ENCODE measurements at regions of chr2 and their contacts with region 1.

Region 1: GRCh38 chr2:158456309-158457066 is at the starts of genes CCDC148 and PKP4:
- DNase-seq: peak; percentile 94
- ATAC-seq: peak; percentile 84
- H3K4me3 ChIP-seq: peak within 1 kb of the TSS; percentile 84 to 100 (median 97)
- H3K27ac ChIP-seq: peak within 1 kb of the TSS; percentile 97
- H3K4me1 ChIP-seq: peaks cover 55% of the 10 kb centered on the region
- H3K27me3 ChIP-seq: no peaks in the 10 kb centered on the region; a peak in 1 of 5 replicates
- CTCF ChIP-seq: peak; percentile 44; the same call in 1 of the 2 replicates
- EP300 ChIP-seq: peak in 1 of 2 experiments; percentile 7; a peak in 1 of 4 replicates
- POLR2A ChIP-seq: peak in 1 of 2 experiments; percentile 50; a peak in 1 of 4 replicates
- RAD21 ChIP-seq: no peak
- total RNA-seq, gene CCDC148: 0.49 and 0.73 TPM in 2 replicates
- total RNA-seq, gene PKP4: 80.9 and 84.8 TPM in 2 replicates

Region 2: GRCh38 chr2:157684940-157685466 is 771.5 kb before region 1 on chr2:
- CTCF ChIA-PET with region 1: no interaction called
- POLR2A ChIA-PET with region 1: no interaction called
- in situ Hi-C with region 1: no loop called
- intact Hi-C with region 1: no loop called
- DNase-seq: no peak
- ATAC-seq: no peak
- H3K4me3 ChIP-seq: no peak overlapping the region
- H3K27ac ChIP-seq: no peak overlapping the region
- H3K4me1 ChIP-seq: no peaks in the 10 kb centered on the region
- H3K27me3 ChIP-seq: no peaks in the 10 kb centered on the region
- CTCF ChIP-seq: no peak
- EP300 ChIP-seq: no peak
- POLR2A ChIP-seq: no peak
- RAD21 ChIP-seq: no peak

Region 3: GRCh38 chr2:158034199-158034866 is 422.2 kb before region 1 on chr2:
- CTCF ChIA-PET with region 1: no interaction called
- POLR2A ChIA-PET with region 1: no interaction called
- in situ Hi-C with region 1: no loop called
- intact Hi-C with region 1: loop called (anchors 5 kb)
- DNase-seq: peak; percentile 74
- ATAC-seq: peak; percentile 96
- H3K4me3 ChIP-seq: no peak overlapping the region
- H3K27ac ChIP-seq: no peak overlapping the region
- H3K4me1 ChIP-seq: no peaks in the 10 kb centered on the region
- H3K27me3 ChIP-seq: peaks cover 0 to 17% of the 10 kb centered on the region in 2 experiments; a peak in 2 of 5 replicates
- CTCF ChIP-seq: peak; percentile 89
- EP300 ChIP-seq: no peak
- POLR2A ChIP-seq: no peak
- RAD21 ChIP-seq: peak; percentile 70

Region 4: GRCh38 chr2:158079672-158080071 is 376.8 kb before region 1 on chr2:
- CTCF ChIA-PET with region 1: no interaction called
- POLR2A ChIA-PET with region 1: no interaction called
- in situ Hi-C with region 1: no loop called
- intact Hi-C with region 1: loop called (anchors 5 kb)
- DNase-seq: peak; percentile 98
- ATAC-seq: peak; percentile 100
- H3K4me3 ChIP-seq: no peak overlapping the region; a peak in 2 of 6 replicates
- H3K27ac ChIP-seq: peak overlapping the region; percentile 36
- H3K4me1 ChIP-seq: peaks cover 24% of the 10 kb centered on the region
- H3K27me3 ChIP-seq: no peaks in the 10 kb centered on the region
- CTCF ChIP-seq: no peak
- EP300 ChIP-seq: peak in 1 of 2 experiments; percentile 93; a peak in 2 of 4 replicates
- POLR2A ChIP-seq: no peak
- RAD21 ChIP-seq: no peak

Region 5: GRCh38 chr2:158120664-158121641 is 335.5 kb before region 1 on chr2:
- CTCF ChIA-PET with region 1: no interaction called
- POLR2A ChIA-PET with region 1: no interaction called
- in situ Hi-C with region 1: no loop called
- intact Hi-C with region 1: no loop called
- DNase-seq: no peak
- ATAC-seq: no peak
- H3K4me3 ChIP-seq: no peak overlapping the region
- H3K27ac ChIP-seq: no peak overlapping the region
- H3K4me1 ChIP-seq: peaks cover 46% of the 10 kb centered on the region
- H3K27me3 ChIP-seq: no peaks in the 10 kb centered on the region
- CTCF ChIP-seq: no peak
- EP300 ChIP-seq: no peak
- POLR2A ChIP-seq: no peak
- RAD21 ChIP-seq: no peak

Region 6: GRCh38 chr2:158179660-158180059 is 276.8 kb before region 1 on chr2:
- CTCF ChIA-PET with region 1: no interaction called
- POLR2A ChIA-PET with region 1: interaction called, 10 read pairs
- in situ Hi-C with region 1: loop called (anchors 5 kb)
- intact Hi-C with region 1: loop called (anchors 1 kb)
- DNase-seq: peak; percentile 35
- ATAC-seq: peak; percentile 82
- H3K4me3 ChIP-seq: no peak overlapping the region
- H3K27ac ChIP-seq: no peak overlapping the region
- H3K4me1 ChIP-seq: peaks cover 51% of the 10 kb centered on the region
- H3K27me3 ChIP-seq: no peaks in the 10 kb centered on the region
- CTCF ChIP-seq: peak; percentile 81
- EP300 ChIP-seq: no peak
- POLR2A ChIP-seq: no peak
- RAD21 ChIP-seq: peak; percentile 78

Region 7: GRCh38 chr2:158191076-158191895 is 265.2 kb before region 1 on chr2:
- CTCF ChIA-PET with region 1: no interaction called
- POLR2A ChIA-PET with region 1: interaction called, 16 read pairs
- in situ Hi-C with region 1: no loop called
- intact Hi-C with region 1: no loop called
- DNase-seq: peak; percentile 95
- ATAC-seq: peak; percentile 76
- H3K4me3 ChIP-seq: peak overlapping the region; percentile 13 to 34 (median 19); a peak in 5 of 6 replicates
- H3K27ac ChIP-seq: peak overlapping the region; percentile 82
- H3K4me1 ChIP-seq: peaks cover 70% of the 10 kb centered on the region
- H3K27me3 ChIP-seq: no peaks in the 10 kb centered on the region
- CTCF ChIP-seq: no peak
- EP300 ChIP-seq: peak in 1 of 2 experiments; percentile 98; a peak in 2 of 4 replicates
- POLR2A ChIP-seq: no peak
- RAD21 ChIP-seq: no peak

Region 8: DNA sequence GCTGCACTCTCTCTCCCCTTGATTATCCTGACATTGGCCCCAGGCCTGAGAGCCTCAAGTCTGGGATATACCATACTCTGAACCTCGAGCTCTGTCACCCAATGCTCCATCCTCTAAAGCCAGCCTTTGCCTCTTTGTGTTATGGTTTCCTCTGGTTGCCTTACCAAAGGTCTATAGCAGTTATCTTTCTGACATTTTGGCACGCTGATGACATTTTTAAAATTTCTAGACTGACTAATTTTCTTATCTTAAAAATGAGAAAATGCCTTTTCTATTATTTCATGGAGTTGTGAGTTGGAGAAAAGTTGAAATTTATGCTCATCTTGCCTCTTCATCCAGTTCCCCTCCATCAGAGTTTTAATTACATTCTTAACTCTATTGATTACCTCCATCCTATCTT is 63.0 kb after region 1 on chr2:
- CTCF ChIA-PET with region 1: no interaction called
- POLR2A ChIA-PET with region 1: no interaction called
- in situ Hi-C with region 1: no loop called
- intact Hi-C with region 1: no loop called
- DNase-seq: no peak
- ATAC-seq: no peak
- H3K4me3 ChIP-seq: no peak overlapping the region
- H3K27ac ChIP-seq: no peak overlapping the region
- H3K4me1 ChIP-seq: peaks cover 29% of the 10 kb centered on the region
- H3K27me3 ChIP-seq: no peaks in the 10 kb centered on the region
- CTCF ChIP-seq: no peak
- EP300 ChIP-seq: no peak
- POLR2A ChIP-seq: no peak
- RAD21 ChIP-seq: no peak

Region 9: DNA sequence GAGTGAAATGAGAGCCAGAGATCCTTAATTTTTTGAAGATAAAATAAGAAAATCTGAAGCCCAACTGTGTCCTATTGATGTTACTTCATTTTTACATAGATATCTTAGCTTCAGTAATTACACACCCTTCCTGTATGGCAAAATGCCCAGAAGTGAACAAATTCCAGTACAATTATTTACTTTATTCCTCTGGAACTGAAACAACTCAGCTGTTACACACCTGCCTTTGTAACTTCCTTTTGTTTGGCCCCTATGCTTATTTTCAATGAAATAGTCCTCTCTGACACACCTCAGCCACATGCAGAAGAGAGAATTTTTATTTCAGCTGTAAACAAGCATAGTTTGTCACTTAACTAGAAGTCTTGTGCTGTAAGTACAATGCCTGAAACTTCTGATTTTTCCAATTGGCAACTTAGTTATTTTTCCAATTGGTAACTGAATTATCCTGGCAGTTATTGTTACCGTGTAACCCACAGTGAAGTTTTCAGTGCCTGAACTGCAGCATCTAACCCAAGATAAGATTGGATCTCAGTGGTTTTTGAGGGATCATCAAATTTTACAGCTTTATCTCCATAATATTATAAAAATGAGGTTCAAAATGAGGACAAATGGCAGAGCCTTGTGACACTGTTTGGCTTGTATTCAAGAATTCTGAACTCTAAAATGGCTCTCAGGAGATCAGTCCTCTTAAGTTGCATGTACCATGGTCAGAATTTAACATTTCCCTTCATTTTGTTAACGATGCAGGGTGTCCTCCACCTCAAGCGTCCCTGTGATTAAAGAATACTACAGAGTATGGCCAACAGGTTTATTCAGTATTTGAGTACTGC is 82.9 kb after region 1 on chr2:
- CTCF ChIA-PET with region 1: no interaction called
- POLR2A ChIA-PET with region 1: interaction called, 3 read pairs
- in situ Hi-C with region 1: no loop called
- intact Hi-C with region 1: loop called (anchors 2 kb)
- DNase-seq: peak; percentile 93
- ATAC-seq: peak; percentile 89
- H3K4me3 ChIP-seq: no peak overlapping the region
- H3K27ac ChIP-seq: peak overlapping the region; percentile 36
- H3K4me1 ChIP-seq: peaks cover 38% of the 10 kb centered on the region
- H3K27me3 ChIP-seq: no peaks in the 10 kb centered on the region
- CTCF ChIP-seq: no peak
- EP300 ChIP-seq: peak in 1 of 2 experiments; percentile 56; a peak in 1 of 4 replicates
- POLR2A ChIP-seq: no peak
- RAD21 ChIP-seq: no peak

Region 10: GRCh38 chr2:158745044-158745865 is 288.8 kb after region 1 on chr2:
- CTCF ChIA-PET with region 1: no interaction called
- POLR2A ChIA-PET with region 1: no interaction called
- in situ Hi-C with region 1: loop called (anchors 25 kb)
- intact Hi-C with region 1: loop called (anchors 2 kb)
- DNase-seq: peak; percentile 64
- ATAC-seq: peak; percentile 90
- H3K4me3 ChIP-seq: no peak overlapping the region
- H3K27ac ChIP-seq: no peak overlapping the region
- H3K4me1 ChIP-seq: peaks cover 30% of the 10 kb centered on the region
- H3K27me3 ChIP-seq: peaks cover under 1 to 31% of the 10 kb centered on the region in 2 experiments; a peak in 4 of 5 replicates
- CTCF ChIP-seq: peak; percentile 80
- EP300 ChIP-seq: no peak
- POLR2A ChIP-seq: no peak
- RAD21 ChIP-seq: peak; percentile 57